Motor neuron (in vitro differentiated cells): ENCODE measurements at regions of chr4 and their contacts with region 1.

Region 1: DNA sequence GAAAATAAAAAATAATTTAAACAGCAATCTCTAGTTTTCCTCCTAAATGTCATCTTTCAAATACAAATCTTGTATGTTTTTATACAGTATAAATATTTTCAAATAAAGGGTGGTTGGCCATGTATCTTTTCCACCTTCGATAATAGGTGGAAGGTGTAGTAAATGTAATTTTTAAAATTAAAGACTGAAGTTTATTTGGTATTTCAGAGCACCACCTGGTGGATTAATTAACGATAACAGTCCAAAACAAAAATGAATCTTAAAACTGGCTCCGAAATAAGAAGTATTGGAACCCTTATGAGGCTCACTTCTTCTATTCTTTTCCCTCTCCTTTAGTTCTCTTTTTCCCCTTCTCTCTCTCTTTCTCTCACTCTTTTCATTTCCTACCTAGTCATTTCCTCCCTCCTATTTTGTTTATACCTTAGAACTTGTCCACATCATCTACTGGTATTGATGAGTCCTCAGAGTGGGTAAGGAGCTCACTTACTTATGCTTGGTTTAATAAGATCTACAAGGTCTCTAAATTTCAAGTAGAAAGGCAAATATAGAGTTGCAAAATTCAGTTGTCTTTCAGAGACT is 82.9 kb upstream of the EXOC1L start:
- ATAC-seq: no peak
- H3K4me3 ChIP-seq: no peak overlapping the region
- H3K27ac ChIP-seq: no peak overlapping the region
- H3K4me1 ChIP-seq: no peaks in the 10 kb centered on the region

Region 2: GRCh38 chr4:55435141-55435841 is 301.4 kb before region 1 on chr4:
- in situ Hi-C with region 1: loop called in 1 of 9 experiments (anchors 25 kb)
- ATAC-seq: peak in 4 of 8 experiments; percentile 26 to 82 (median 69)
- H3K4me3 ChIP-seq: no peak overlapping the region
- H3K27ac ChIP-seq: no peak overlapping the region
- H3K4me1 ChIP-seq: no peaks in the 10 kb centered on the region

Region 3: GRCh38 chr4:55554453-55555030 is 182.2 kb before region 1 on chr4:
- in situ Hi-C with region 1: loop called in 1 of 9 experiments (anchors 25 kb)
- ATAC-seq: peak in 2 of 8 experiments; percentile 13 to 18
- H3K4me3 ChIP-seq: no peak overlapping the region
- H3K27ac ChIP-seq: no peak overlapping the region
- H3K4me1 ChIP-seq: no peaks in the 10 kb centered on the region